Activated T-helper 2 cell treated with anti-CD3 and anti-CD28 coated beads, Interferon-gamma antibody, Interleukin-2, Interleukin-4, amounts not matched to agents 10 μg/mL and 5 μg/mL and 100 μg/mL, durations not matched to agents 14 hours and 24 hours and 36 hours (primary cell): ENCODE measurements at regions of chr1 and their contacts with region 1.

Region 1: GRCh38 chr1:174726167-174726879 is 273.4 kb upstream of the CACYBP start:
- DNase-seq: no peak
- H3K4me3 Mint-ChIP-seq: no peak overlapping the region
- H3K27ac Mint-ChIP-seq: no peak overlapping the region
- H3K4me1 Mint-ChIP-seq: peaks cover 2% of the 10 kb centered on the region
- H3K27me3 Mint-ChIP-seq: peaks cover 5% of the 10 kb centered on the region

Region 2: DNA sequence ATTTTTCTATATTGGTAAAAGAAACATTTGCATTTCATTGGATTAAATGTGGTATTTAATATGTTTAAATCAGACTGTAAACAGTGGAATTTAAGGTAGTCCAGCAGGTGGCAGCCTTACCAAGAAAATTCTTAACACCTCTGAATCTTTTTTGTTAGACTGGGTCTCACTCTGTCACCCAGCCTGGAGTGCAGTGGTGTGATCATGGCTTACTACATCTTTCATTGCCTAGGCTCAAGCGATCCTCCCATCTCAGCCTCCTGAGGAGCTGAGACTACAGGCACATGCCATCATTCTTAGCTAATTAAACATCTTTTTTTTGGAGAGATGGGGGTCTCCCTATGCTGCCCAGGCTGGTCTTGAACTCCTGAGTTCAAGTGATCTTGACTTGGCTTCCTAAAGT is 468.2 kb before region 1 on chr1:
- intact Hi-C with region 1: loop called (anchors 1 kb)
- DNase-seq: no peak
- H3K4me3 Mint-ChIP-seq: no peak overlapping the region
- H3K27ac Mint-ChIP-seq: no peak overlapping the region
- H3K4me1 Mint-ChIP-seq: no peaks in the 10 kb centered on the region
- H3K27me3 Mint-ChIP-seq: no peaks in the 10 kb centered on the region